Endothelial cell of umbilical vein (primary cell): ENCODE measurements at regions of chr9 and their contacts with region 1.

Region 1: GRCh38 chr9:89000973-89001916 is 10.0 kb downstream of the S1PR3 start:
- DNase-seq: peak; percentile 77
- H3K4me3 ChIP-seq: no peak overlapping the region
- H3K27ac ChIP-seq: no peak overlapping the region
- H3K4me1 ChIP-seq: no peaks in the 10 kb centered on the region
- H3K27me3 ChIP-seq: no peaks in the 10 kb centered on the region
- CTCF ChIP-seq: peak; percentile 59 to 71
- POLR2A ChIP-seq: no peak

Region 2: GRCh38 chr9:87950765-87951488 is 1050.3 kb before region 1 on chr9:
- CTCF ChIA-PET with region 1: interaction called, 7 read pairs
- POLR2A ChIA-PET with region 1: no interaction called
- dilution Hi-C with region 1: no loop called
- intact Hi-C with region 1: loop called (anchors 1 kb)
- DNase-seq: peak; percentile 32
- H3K4me3 ChIP-seq: no peak overlapping the region
- H3K27ac ChIP-seq: no peak overlapping the region
- H3K4me1 ChIP-seq: no peaks in the 10 kb centered on the region
- H3K27me3 ChIP-seq: peaks cover 0 to 2% of the 10 kb centered on the region in 2 experiments
- CTCF ChIP-seq: peak; percentile 31 to 50
- POLR2A ChIP-seq: no peak

Region 3: DNA sequence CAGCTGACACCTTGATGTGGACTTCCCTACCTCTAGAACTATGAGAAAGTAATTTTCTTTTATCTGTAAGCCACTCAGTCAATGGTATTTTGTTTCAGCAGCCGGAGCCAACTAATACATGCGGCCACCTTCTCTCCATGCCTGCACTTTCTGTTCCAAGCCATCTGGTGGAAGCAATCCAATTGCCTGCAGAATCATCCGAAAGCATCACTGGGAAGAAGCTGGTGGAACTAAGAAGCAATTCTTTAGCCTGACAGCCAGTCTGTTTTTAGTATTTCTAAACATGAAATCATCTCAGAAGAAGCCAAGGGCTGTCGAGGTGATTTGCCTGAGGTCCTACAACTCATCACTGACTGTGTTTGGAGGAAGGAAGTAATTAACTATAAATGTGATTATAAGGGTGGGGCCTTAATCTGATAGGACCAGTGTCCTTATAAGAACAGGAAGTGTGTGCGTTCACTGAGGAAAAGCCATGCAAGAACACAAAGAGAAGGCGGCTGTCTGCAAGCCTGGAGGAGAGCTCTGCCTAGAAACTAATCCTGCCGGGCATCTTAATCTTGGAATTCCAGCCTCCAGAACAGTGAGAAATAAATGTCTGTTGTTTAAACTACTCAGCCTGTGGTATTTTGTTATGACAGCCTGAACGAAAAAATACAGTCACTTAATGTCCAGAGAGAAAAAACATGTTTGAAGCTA is 417.2 kb before region 1 on chr9:
- CTCF ChIA-PET with region 1: interaction called, 15 read pairs
- POLR2A ChIA-PET with region 1: no interaction called
- dilution Hi-C with region 1: no loop called
- intact Hi-C with region 1: no loop called
- DNase-seq: peak; percentile 56
- H3K4me3 ChIP-seq: no peak overlapping the region
- H3K27ac ChIP-seq: peak overlapping the region; percentile 32
- H3K4me1 ChIP-seq: peaks cover 13% of the 10 kb centered on the region
- H3K27me3 ChIP-seq: no peaks in the 10 kb centered on the region
- CTCF ChIP-seq: no peak
- POLR2A ChIP-seq: no peak

Region 4: GRCh38 chr9:88660611-88661010 is 340.6 kb before region 1 on chr9:
- CTCF ChIA-PET with region 1: interaction called, 75 read pairs
- POLR2A ChIA-PET with region 1: no interaction called
- dilution Hi-C with region 1: no loop called
- intact Hi-C with region 1: loop called (anchors 1 kb)
- DNase-seq: peak; percentile 46
- H3K4me3 ChIP-seq: no peak overlapping the region
- H3K27ac ChIP-seq: no peak overlapping the region
- H3K4me1 ChIP-seq: no peaks in the 10 kb centered on the region
- H3K27me3 ChIP-seq: no peaks in the 10 kb centered on the region
- CTCF ChIP-seq: peak; percentile 36 to 50
- POLR2A ChIP-seq: no peak

Region 5: GRCh38 chr9:88741335-88741734 is 259.9 kb before region 1 on chr9:
- CTCF ChIA-PET with region 1: interaction called, 4 read pairs
- POLR2A ChIA-PET with region 1: no interaction called
- dilution Hi-C with region 1: no loop called
- intact Hi-C with region 1: loop called (anchors 1 kb)
- DNase-seq: no peak
- H3K4me3 ChIP-seq: no peak overlapping the region
- H3K27ac ChIP-seq: no peak overlapping the region
- H3K4me1 ChIP-seq: peaks cover 2% of the 10 kb centered on the region
- H3K27me3 ChIP-seq: no peaks in the 10 kb centered on the region
- CTCF ChIP-seq: peak; percentile 27 to 46
- POLR2A ChIP-seq: no peak